Activated CD4-positive, alpha-beta T cell treated with anti-CD3 and anti-CD28 coated beads, Interleukin-2, amount 10 ng/mL, durations not matched to agents 24 days and 14 days (primary cell): ENCODE measurements at regions of chr13 and their contacts with region 1.

Region 1: DNA sequence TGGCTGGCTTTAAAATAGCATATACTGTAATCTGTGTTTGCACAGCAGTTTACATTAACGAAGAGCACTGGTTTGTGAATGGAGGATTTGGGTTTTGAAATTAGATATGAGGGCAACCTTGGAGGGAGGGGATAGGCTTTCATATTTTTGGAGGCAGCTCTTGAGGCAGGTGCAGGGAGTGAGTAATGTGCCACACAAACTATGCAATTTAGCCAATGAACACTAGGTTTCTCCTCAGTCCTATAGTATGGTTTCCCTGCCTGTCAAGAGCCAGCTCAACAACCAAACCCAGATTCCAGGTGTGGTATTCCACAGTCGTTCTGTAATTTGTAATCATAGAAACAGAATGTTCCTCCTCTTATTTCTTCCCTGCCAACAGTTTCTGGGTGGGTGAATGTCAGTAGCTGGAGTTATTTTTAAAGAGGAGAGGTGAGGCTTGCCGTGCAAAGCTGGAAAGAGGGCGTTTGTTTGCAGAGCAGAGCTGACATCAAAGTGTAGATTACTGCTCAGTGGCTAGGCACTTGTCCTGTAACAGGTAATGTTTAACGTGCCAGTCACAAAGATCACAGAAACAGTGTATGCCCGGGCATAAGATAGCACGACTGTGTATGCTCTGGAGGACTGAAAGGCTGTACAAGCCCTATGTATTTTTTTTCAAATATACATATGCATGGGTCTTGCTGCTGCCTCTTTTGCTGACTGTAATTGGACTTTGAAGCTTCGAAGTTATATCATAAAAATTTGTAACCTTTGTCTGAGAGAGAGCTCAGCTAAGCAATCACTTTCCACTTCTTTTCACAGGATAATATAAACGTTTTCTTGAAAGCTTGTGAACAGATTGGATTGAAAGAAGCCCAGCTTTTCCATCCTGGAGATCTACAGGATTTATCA is 124.2 kb downstream of the LMO7 start:
- DNase-seq: peak; percentile 70
- H3K4me3 Mint-ChIP-seq: peak overlapping the region; percentile 81
- H3K27ac Mint-ChIP-seq: no peak overlapping the region
- H3K4me1 Mint-ChIP-seq: peaks cover 40% of the 10 kb centered on the region
- H3K27me3 Mint-ChIP-seq: no peaks in the 10 kb centered on the region

Region 2: GRCh38 chr13:75489502-75490263 is 270.7 kb before region 1 on chr13:
- intact Hi-C with region 1: loop called (anchors 5 kb)
- DNase-seq: peak; percentile 60
- H3K4me3 Mint-ChIP-seq: no peak overlapping the region
- H3K27ac Mint-ChIP-seq: peak overlapping the region; percentile 71
- H3K4me1 Mint-ChIP-seq: peaks cover 38% of the 10 kb centered on the region
- H3K27me3 Mint-ChIP-seq: peaks cover 15% of the 10 kb centered on the region

Region 3: GRCh38 chr13:75635828-75636435 is 124.4 kb before region 1 on chr13 and contains the start of gene LMO7:
- intact Hi-C with region 1: loop called (anchors 5 kb)
- DNase-seq: peak; percentile 84
- H3K4me3 Mint-ChIP-seq: peak within 1 kb of the TSS; percentile 79
- H3K27ac Mint-ChIP-seq: no peak within 1 kb of the TSS
- H3K4me1 Mint-ChIP-seq: peaks cover 14% of the 10 kb centered on the region
- H3K27me3 Mint-ChIP-seq: peaks cover 21% of the 10 kb centered on the region
- total RNA-seq, gene LMO7: 4.3 and 5.8 TPM in 2 replicates

Region 4: DNA sequence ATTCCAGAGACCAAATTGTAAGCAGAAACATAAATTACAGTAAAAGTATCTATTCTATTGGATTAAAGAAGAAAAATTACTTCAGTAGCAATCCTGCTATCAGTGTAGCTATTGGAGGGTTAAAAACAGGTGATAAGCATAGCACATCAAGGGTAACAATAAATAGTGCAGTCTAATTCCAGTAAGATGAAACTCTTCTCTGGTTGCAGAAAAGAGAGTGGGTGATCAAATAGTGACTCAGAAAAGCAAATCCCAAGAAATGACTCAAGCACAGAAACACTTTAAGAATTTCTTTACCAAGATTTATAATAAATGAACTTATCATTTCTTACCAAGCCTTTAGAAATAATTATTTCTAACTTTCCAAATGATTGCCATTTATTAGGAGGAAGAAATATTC is 11.4 kb after region 1 on chr13:
- intact Hi-C with region 1: loop called (anchors 1 kb)
- DNase-seq: peak; percentile 1
- H3K4me3 Mint-ChIP-seq: no peak overlapping the region
- H3K27ac Mint-ChIP-seq: no peak overlapping the region
- H3K4me1 Mint-ChIP-seq: peaks cover 11% of the 10 kb centered on the region
- H3K27me3 Mint-ChIP-seq: no peaks in the 10 kb centered on the region

Region 5: GRCh38 chr13:75876360-75877050 is 116.1 kb after region 1 on chr13:
- intact Hi-C with region 1: loop called (anchors 5 kb)
- DNase-seq: peak; percentile 85
- H3K4me3 Mint-ChIP-seq: no peak overlapping the region
- H3K27ac Mint-ChIP-seq: no peak overlapping the region
- H3K4me1 Mint-ChIP-seq: peaks cover 12% of the 10 kb centered on the region
- H3K27me3 Mint-ChIP-seq: peaks cover 16% of the 10 kb centered on the region

Region 6: DNA sequence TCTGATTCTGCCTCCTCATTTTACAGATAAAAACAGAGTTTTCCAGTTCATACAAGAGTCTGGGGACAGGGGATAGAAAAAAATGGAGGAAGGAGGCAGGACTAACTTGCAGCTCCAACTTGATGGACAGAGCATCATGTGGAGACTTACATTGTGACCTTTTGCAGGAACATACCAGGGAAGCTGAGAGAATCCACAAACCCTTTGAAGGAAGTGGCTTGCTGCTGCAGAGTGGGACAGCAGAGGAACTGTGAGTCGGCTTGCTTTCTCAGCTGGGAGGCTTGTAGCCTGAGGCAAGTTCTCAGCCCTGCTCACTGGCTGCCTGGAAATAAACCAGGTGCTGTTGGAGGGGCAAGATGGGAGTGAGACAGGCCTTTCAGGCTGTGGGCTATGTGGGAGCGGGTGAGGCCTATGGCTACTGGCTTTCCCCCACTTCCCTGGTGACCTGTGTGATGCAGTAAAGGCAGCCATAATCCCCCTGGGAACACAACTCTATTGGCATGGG is 511.4 kb after region 1 on chr13:
- intact Hi-C with region 1: no loop called
- DNase-seq: no peak
- H3K4me3 Mint-ChIP-seq: no peak overlapping the region
- H3K27ac Mint-ChIP-seq: no peak overlapping the region
- H3K4me1 Mint-ChIP-seq: no peaks in the 10 kb centered on the region
- H3K27me3 Mint-ChIP-seq: no peaks in the 10 kb centered on the region